CD4-positive, alpha-beta T cell (primary cell): ENCODE measurements at regions of chr2 and their contacts with region 1.

Region 1: GRCh38 chr2:219119422-219120043 is 41.1 kb downstream of the NHEJ1 start:
- DNase-seq: peak; percentile 29 to 76 (median 46)
- ATAC-seq: no peak
- H3K4me3 ChIP-seq: no peak overlapping the region
- H3K4me3 Mint-ChIP-seq: no peak overlapping the region
- H3K27ac ChIP-seq: no peak overlapping the region
- H3K27ac Mint-ChIP-seq: no peak overlapping the region
- H3K4me1 ChIP-seq: peaks cover under 1% of the 10 kb centered on the region
- H3K4me1 Mint-ChIP-seq: peaks cover 14% of the 10 kb centered on the region
- H3K27me3 ChIP-seq: no peaks in the 10 kb centered on the region
- H3K27me3 Mint-ChIP-seq: no peaks in the 10 kb centered on the region
- CTCF ChIP-seq: peak; percentile 62

Region 2: GRCh38 chr2:219010162-219010756 is 109.3 kb before region 1 on chr2:
- CTCF ChIA-PET with region 1: no interaction called
- POLR2A ChIA-PET with region 1: no interaction called
- intact Hi-C with region 1: no loop called
- DNase-seq: peak in 2 of 14 experiments; percentile 16 to 40
- ATAC-seq: peak; percentile 71
- H3K4me3 ChIP-seq: no peak overlapping the region
- H3K4me3 Mint-ChIP-seq: no peak overlapping the region
- H3K27ac ChIP-seq: no peak overlapping the region
- H3K27ac Mint-ChIP-seq: no peak overlapping the region
- H3K4me1 ChIP-seq: no peaks in the 10 kb centered on the region
- H3K4me1 Mint-ChIP-seq: no peaks in the 10 kb centered on the region
- H3K27me3 ChIP-seq: peaks cover 21% of the 10 kb centered on the region in 2 experiments
- H3K27me3 Mint-ChIP-seq: peaks cover 53% of the 10 kb centered on the region
- CTCF ChIP-seq: peak; percentile 35

Region 3: GRCh38 chr2:219029829-219030165 is 89.7 kb before region 1 on chr2:
- CTCF ChIA-PET with region 1: interaction called, 3 read pairs
- POLR2A ChIA-PET with region 1: no interaction called
- intact Hi-C with region 1: loop called in 1 of 2 experiments (anchors 1 kb)
- DNase-seq: peak; percentile 57 to 87 (median 68)
- ATAC-seq: peak; percentile 95
- H3K4me3 ChIP-seq: no peak overlapping the region
- H3K4me3 Mint-ChIP-seq: no peak overlapping the region
- H3K27ac ChIP-seq: no peak overlapping the region
- H3K27ac Mint-ChIP-seq: no peak overlapping the region
- H3K4me1 ChIP-seq: no peaks in the 10 kb centered on the region
- H3K4me1 Mint-ChIP-seq: no peaks in the 10 kb centered on the region
- H3K27me3 ChIP-seq: peaks cover 3 to 19% of the 10 kb centered on the region in 2 experiments
- H3K27me3 Mint-ChIP-seq: peaks cover 42% of the 10 kb centered on the region
- CTCF ChIP-seq: peak; percentile 94

Region 4: GRCh38 chr2:219057709-219058540 is 61.6 kb before region 1 on chr2:
- CTCF ChIA-PET with region 1: interaction called, 10 read pairs
- POLR2A ChIA-PET with region 1: no interaction called
- intact Hi-C with region 1: loop called (anchors 1 kb)
- DNase-seq: peak; percentile 54 to 87 (median 72)
- ATAC-seq: peak; percentile 98
- H3K4me3 ChIP-seq: peak overlapping the region; percentile 2
- H3K4me3 Mint-ChIP-seq: peak overlapping the region; percentile 76
- H3K27ac ChIP-seq: no peak overlapping the region
- H3K27ac Mint-ChIP-seq: no peak overlapping the region
- H3K4me1 ChIP-seq: peaks cover 38% of the 10 kb centered on the region
- H3K4me1 Mint-ChIP-seq: peaks cover 20% of the 10 kb centered on the region
- H3K27me3 ChIP-seq: peaks cover 57 to 79% of the 10 kb centered on the region in 2 experiments
- H3K27me3 Mint-ChIP-seq: peaks cover 79% of the 10 kb centered on the region
- CTCF ChIP-seq: peak; percentile 97

Region 5: GRCh38 chr2:219073413-219074129 is 46.0 kb before region 1 on chr2:
- CTCF ChIA-PET with region 1: no interaction called
- POLR2A ChIA-PET with region 1: no interaction called
- intact Hi-C with region 1: loop called in 1 of 2 experiments (anchors 5 kb)
- DNase-seq: peak in 4 of 14 experiments; percentile 14 to 46 (median 28)
- ATAC-seq: no peak
- H3K4me3 ChIP-seq: no peak overlapping the region
- H3K4me3 Mint-ChIP-seq: no peak overlapping the region
- H3K27ac ChIP-seq: no peak overlapping the region
- H3K27ac Mint-ChIP-seq: no peak overlapping the region
- H3K4me1 ChIP-seq: no peaks in the 10 kb centered on the region
- H3K4me1 Mint-ChIP-seq: no peaks in the 10 kb centered on the region
- H3K27me3 ChIP-seq: no peaks in the 10 kb centered on the region
- H3K27me3 Mint-ChIP-seq: no peaks in the 10 kb centered on the region
- CTCF ChIP-seq: peak; percentile 27

Region 6: DNA sequence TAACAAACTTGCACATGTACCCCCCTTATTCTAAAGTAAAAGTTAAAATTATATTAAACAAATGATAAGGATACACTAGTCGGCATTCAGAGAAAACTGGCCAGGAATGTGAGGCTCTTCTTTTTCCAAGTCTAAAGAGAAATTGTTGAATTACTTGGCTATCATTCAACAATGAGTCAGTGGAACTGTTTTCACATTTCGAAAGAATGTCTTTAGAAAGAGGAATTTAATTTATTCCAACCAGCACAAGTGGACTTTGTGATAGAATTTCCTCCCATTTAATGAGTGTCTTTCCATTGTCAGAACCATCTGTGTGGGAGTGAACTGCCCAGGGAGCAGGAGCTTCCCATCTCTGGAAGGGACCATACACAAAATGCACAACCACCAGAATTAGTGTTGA is 1660.4 kb after region 1 on chr2:
- CTCF ChIA-PET with region 1: no interaction called
- POLR2A ChIA-PET with region 1: no interaction called
- intact Hi-C with region 1: no loop called
- DNase-seq: no peak
- ATAC-seq: no peak
- H3K4me3 ChIP-seq: no peak overlapping the region
- H3K4me3 Mint-ChIP-seq: no peak overlapping the region
- H3K27ac ChIP-seq: no peak overlapping the region
- H3K27ac Mint-ChIP-seq: no peak overlapping the region
- H3K4me1 ChIP-seq: no peaks in the 10 kb centered on the region
- H3K4me1 Mint-ChIP-seq: no peaks in the 10 kb centered on the region
- H3K27me3 ChIP-seq: no peaks in the 10 kb centered on the region
- H3K27me3 Mint-ChIP-seq: peaks cover 10% of the 10 kb centered on the region
- CTCF ChIP-seq: no peak